Activated CD4-positive, alpha-beta T cell treated with anti-CD3 and anti-CD28 coated beads for 36 hours (primary cell): ENCODE measurements at regions of chr21 and their contacts with region 1.

Region 1: DNA sequence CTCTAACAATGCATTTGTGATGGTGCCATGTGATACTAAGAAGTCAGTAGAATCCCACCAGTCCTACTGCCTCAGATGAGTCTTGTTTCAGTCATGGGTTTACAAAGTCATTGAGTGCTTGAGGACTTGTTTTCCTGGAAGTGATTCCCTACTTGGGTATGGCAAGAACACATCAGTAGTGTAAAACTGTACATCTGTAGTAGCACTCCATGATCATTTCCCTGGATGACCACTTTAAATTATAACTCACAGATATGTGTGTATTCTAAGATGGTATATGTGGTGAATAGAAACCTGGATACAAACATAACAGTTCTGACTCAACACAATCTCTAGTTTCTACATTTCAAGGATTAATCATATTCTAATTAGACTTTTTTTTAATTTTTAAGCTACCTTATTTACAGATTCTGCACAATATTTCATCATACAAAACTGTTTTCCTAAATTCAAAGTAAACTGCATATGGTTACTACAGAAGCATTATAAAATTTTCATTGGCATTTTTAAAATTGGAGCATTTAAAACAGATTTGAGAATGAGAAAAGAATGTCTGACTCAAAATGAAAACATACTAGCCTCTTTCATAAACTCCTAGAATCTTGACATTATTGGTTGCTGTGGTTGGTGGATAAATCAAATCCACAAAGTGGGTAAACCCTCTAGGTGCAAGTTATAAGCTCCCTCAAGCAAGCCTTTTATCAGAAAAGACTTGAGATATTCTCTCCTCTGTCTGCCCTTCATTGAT is 6.8 kb upstream of the PSMG1 start:
- DNase-seq: no peak
- ATAC-seq: peak; percentile 84
- H3K4me3 Mint-ChIP-seq: no peak overlapping the region
- H3K27ac Mint-ChIP-seq: no peak overlapping the region
- H3K4me1 Mint-ChIP-seq: peaks cover 52% of the 10 kb centered on the region
- H3K27me3 Mint-ChIP-seq: no peaks in the 10 kb centered on the region

Region 2: GRCh38 chr21:39238275-39238674 is 48.2 kb after region 1 on chr21:
- CTCF ChIA-PET with region 1: no interaction called
- POLR2A ChIA-PET with region 1: no interaction called
- intact Hi-C with region 1: loop called (anchors 2 to 5 kb)
- DNase-seq: no peak
- ATAC-seq: peak; percentile 71
- H3K4me3 Mint-ChIP-seq: no peak overlapping the region
- H3K27ac Mint-ChIP-seq: peak overlapping the region; percentile 45
- H3K4me1 Mint-ChIP-seq: peaks cover 24% of the 10 kb centered on the region
- H3K27me3 Mint-ChIP-seq: no peaks in the 10 kb centered on the region